ENCODE measurements at regions of chrX and their contacts with region 1.

Region 1: GRCh38 chrX:11533211-11533651 is 132.5 kb downstream of the ARHGAP6 start:
- DNase-seq: no peak
- ATAC-seq: peak; percentile 88
- H3K4me3 ChIP-seq: no peak overlapping the region
- H3K27ac ChIP-seq: no peak overlapping the region
- H3K4me1 ChIP-seq: no peaks in the 10 kb centered on the region
- H3K27me3 ChIP-seq: no peaks in the 10 kb centered on the region

Region 2: GRCh38 chrX:11143931-11144678 is 389.1 kb before region 1 on chrX:
- intact Hi-C with region 1: loop called in 2 of 4 experiments (anchors 5 to 10 kb)
- DNase-seq: peak in 2 of 3 donors; percentile 18 to 47
- ATAC-seq: peak; percentile 68 to 81
- H3K4me3 ChIP-seq: no peak overlapping the region
- H3K27ac ChIP-seq: no peak overlapping the region
- H3K4me1 ChIP-seq: no peaks in the 10 kb centered on the region
- H3K27me3 ChIP-seq: no peaks in the 10 kb centered on the region

Region 3: DNA sequence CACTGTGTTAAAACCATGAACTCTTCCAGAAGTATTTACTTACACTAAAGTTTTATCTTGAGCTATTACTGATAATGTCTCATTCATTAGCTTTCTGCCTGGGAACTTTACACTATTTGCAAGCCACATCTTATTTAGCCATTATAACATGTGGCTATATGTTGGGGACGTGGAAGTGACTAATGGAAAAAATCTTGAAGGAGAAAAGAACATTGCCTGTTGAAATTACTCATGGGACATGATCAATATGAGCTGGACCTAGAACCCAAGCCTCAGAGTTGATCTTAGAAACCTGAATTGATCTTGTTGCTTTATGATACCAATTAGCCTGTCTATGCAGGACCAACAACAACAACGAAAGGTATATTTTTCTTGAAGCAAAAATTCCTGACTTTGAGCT is 155.0 kb after region 1 on chrX:
- intact Hi-C with region 1: no loop called
- DNase-seq: no peak
- ATAC-seq: no peak
- H3K4me3 ChIP-seq: no peak overlapping the region
- H3K27ac ChIP-seq: no peak overlapping the region
- H3K4me1 ChIP-seq: no peaks in the 10 kb centered on the region
- H3K27me3 ChIP-seq: no peaks in the 10 kb centered on the region

Region 4: GRCh38 chrX:11724122-11725017 is 191.1 kb after region 1 on chrX:
- intact Hi-C with region 1: loop called in 3 of 4 experiments (anchors 5 to 10 kb)
- DNase-seq: no peak
- ATAC-seq: no peak
- H3K4me3 ChIP-seq: no peak overlapping the region
- H3K27ac ChIP-seq: no peak overlapping the region
- H3K4me1 ChIP-seq: no peaks in the 10 kb centered on the region
- H3K27me3 ChIP-seq: no peaks in the 10 kb centered on the region

Region 5: DNA sequence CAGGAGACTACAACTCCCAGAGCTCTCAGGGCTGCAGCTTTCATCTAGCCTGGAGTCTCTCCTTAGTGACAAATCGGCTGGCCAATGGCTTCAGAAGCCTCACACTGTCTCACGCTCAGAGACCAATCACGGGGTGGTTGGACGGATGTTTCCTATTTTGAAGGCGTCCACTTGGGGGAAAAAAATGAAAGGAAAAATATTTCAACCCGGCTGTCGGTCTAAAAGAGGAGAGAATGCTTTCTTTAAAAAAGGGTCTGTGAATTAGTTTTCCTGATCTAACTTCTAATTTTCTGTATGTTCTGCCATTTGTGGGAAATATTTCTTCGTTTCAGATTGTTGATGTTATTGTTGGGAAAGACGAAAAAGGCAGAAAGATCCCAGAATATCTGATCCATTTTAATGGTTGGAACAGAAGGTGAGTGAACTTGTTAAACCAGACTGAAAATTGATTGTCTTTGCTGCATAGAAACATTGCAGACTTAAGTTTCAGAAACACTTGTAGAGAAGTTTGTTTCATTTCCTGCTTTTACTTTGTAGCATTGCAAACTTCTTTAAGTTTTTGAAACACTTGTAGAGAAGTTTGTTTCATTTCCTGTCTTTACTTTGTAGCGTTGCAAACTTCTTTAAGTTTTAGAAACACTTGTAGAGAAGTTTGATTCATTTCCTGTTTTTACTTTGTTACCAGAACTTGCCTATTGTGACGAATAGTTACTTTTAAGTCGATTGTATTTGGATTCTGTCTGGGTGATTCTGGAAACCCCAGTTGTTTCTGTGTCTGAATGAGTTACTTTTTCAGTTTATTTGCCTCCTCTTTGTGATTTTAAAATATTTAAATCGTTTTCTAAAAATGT is 226.5 kb after region 1 on chrX:
- intact Hi-C with region 1: loop called in 1 of 4 experiments (anchors 10 kb)
- DNase-seq: peak; percentile 83 to 90 (median 84)
- ATAC-seq: peak; percentile 96
- H3K4me3 ChIP-seq: peak overlapping the region; percentile 85
- H3K27ac ChIP-seq: no peak overlapping the region
- H3K4me1 ChIP-seq: no peaks in the 10 kb centered on the region
- H3K27me3 ChIP-seq: no peaks in the 10 kb centered on the region

Region 6: GRCh38 chrX:11770320-11770719 is 237.1 kb after region 1 on chrX:
- intact Hi-C with region 1: loop called (anchors 2 to 10 kb)
- DNase-seq: peak in 2 of 3 donors; percentile 33
- ATAC-seq: peak in 1 of 2 donors; percentile 63
- H3K4me3 ChIP-seq: no peak overlapping the region
- H3K27ac ChIP-seq: no peak overlapping the region
- H3K4me1 ChIP-seq: no peaks in the 10 kb centered on the region
- H3K27me3 ChIP-seq: no peaks in the 10 kb centered on the region